Activated T-helper 1 cell treated with anti-CD3 and anti-CD28 coated beads, Interleukin-12 subunit alpha, Interleukin-12 subunit beta, Interleukin-2, Interleukin-4 antibody, amounts not matched to agents 30 ng/mL and 10 ng/mL and 1 ng/mL, durations not matched to agents 14 hours and 24 hours and 36 hours (primary cell): ENCODE measurements at regions of chr14 and their contacts with region 1.

Region 1: DNA sequence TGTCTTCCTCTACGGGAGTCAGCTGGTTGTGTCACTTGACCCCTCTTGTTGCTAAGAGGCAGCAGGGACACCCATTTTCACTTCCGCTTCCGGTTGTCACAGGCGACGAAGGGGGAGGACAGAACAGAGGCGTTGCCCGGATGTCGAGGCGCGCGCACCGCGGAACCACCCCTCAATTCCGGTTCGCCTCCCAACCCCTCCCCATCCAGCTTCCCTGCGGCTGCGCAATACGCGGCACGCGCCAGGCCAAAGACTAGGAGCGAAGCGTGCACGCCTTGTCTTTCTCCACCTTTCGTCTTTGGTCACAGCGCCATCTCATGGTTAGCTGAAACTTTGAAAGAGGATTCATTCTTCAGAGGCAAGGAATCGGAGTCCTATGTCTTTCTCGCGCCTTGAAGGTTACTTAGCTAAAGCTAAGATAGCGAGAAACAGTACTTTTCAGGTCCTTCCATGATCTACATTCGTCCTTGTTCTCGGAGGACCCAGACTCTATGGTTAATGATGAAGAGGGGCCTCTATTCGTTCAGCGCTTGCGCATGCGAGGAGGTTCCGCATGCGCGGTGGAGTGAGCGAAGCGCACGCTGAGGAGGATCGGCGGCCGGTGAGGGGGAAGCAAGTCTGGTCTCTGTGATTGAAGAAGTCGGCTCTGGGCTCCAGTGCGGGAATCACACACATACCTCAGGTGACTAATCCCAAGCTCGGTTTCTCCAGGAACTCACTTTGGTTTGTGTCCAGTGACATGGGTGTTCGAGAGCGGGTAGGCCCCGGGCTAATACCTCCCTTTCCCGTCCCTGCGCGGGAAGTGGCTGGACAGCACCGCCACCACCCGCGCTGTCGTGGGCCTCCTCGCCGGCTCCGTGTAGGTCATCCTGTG is at the starts of genes ATP6V1D and EIF2S1:
- DNase-seq: peak; percentile 100
- H3K4me3 Mint-ChIP-seq: peak within 1 kb of the TSS; percentile 92
- H3K27ac Mint-ChIP-seq: peak within 1 kb of the TSS; percentile 97
- H3K4me1 Mint-ChIP-seq: peaks cover 81% of the 10 kb centered on the region
- H3K27me3 Mint-ChIP-seq: no peaks in the 10 kb centered on the region
- total RNA-seq, gene ATP6V1D: 29.1 and 30.8 TPM in 2 replicates
- total RNA-seq, gene EIF2S1: 234 and 245 TPM in 2 replicates

Region 2: GRCh38 chr14:66610154-66610563 is 749.9 kb before region 1 on chr14:
- intact Hi-C with region 1: loop called (anchors 10 kb)
- DNase-seq: no peak
- H3K4me3 Mint-ChIP-seq: no peak overlapping the region
- H3K27ac Mint-ChIP-seq: peak overlapping the region; percentile 29
- H3K4me1 Mint-ChIP-seq: peaks cover 21% of the 10 kb centered on the region
- H3K27me3 Mint-ChIP-seq: peaks cover 5% of the 10 kb centered on the region

Region 3: GRCh38 chr14:67240978-67241414 is 119.0 kb before region 1 on chr14:
- intact Hi-C with region 1: loop called (anchors 1 kb)
- DNase-seq: peak; percentile 92
- H3K4me3 Mint-ChIP-seq: peak overlapping the region; percentile 87
- H3K27ac Mint-ChIP-seq: peak overlapping the region; percentile 80
- H3K4me1 Mint-ChIP-seq: peaks cover 18% of the 10 kb centered on the region
- H3K27me3 Mint-ChIP-seq: peaks cover 20% of the 10 kb centered on the region

Region 4: DNA sequence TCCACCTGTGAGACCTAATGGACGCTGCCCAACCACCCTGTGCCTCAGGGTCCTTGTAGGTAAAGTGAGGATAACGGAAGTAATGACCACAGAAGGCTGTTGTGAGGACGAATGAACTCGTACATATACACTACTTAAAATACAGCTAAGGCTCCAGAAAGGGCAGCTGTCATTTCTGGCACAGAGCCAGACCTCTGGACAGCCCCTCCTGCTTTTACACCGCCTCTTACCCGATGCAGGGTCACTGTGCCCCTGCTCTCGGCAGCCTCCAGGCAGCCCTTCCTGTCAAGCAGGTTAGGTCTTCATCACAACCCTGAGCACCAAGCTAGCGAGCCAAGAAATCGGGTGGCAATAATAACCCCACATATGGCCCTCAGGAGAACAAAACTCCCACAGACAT is 120.0 kb after region 1 on chr14:
- intact Hi-C with region 1: no loop called
- DNase-seq: no peak
- H3K4me3 Mint-ChIP-seq: no peak overlapping the region
- H3K27ac Mint-ChIP-seq: no peak overlapping the region
- H3K4me1 Mint-ChIP-seq: no peaks in the 10 kb centered on the region
- H3K27me3 Mint-ChIP-seq: no peaks in the 10 kb centered on the region

Region 5: DNA sequence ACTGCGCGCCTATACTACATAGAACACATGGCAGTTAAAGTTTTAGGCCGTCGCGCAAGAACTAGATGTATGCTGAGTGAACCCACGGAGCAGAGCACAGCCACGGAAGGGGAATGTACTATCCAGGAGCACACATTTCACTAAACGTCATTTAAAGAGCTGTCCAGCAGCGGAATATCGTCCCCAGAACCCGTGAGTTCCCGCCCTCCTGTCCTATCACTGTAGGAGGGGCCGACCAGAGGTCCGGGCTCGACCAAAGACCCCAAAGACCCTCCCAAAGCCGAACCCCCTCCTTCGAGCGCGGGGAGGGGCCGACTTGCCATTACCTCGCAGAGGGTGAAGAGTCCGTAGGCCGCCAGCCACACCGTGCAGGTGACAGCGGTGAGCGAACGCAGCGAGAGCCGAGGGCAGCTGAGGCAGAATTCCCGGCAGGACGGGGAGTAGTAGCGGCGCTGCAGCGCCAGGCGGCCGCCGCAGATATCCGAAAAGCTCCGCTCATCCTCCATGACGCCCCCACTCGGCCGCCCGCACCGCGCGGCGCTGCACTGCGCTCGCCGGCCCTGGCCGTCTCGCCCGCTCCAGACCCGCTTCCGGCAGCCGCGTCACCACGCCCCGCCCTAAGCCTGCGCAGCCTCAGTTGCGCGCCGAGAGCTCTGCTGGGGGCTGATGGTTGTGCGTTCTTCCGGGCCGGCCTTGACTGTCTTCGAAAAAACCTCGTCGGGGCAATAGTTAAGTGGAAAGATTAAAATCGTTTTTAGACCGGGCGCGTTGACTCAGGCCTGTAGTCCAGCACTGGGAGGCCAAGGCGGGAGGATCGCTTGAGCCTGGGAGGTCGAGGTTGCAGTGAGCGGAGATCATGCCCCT is 239.9 kb after region 1 on chr14 and contains the start of gene PIGH:
- intact Hi-C with region 1: loop called (anchors 1 kb)
- DNase-seq: peak; percentile 92
- H3K4me3 Mint-ChIP-seq: peak within 1 kb of the TSS; percentile 99
- H3K27ac Mint-ChIP-seq: peak within 1 kb of the TSS; percentile 94
- H3K4me1 Mint-ChIP-seq: peaks cover 44% of the 10 kb centered on the region
- H3K27me3 Mint-ChIP-seq: peaks cover 18% of the 10 kb centered on the region
- total RNA-seq, gene PIGH: 22.7 and 26.0 TPM in 2 replicates

Region 6: GRCh38 chr14:67674481-67675169 is 314.6 kb after region 1 on chr14 and contains the start of gene VTI1B:
- intact Hi-C with region 1: loop called (anchors 2 kb)
- DNase-seq: peak; percentile 70
- H3K4me3 Mint-ChIP-seq: peak within 1 kb of the TSS; percentile 90
- H3K27ac Mint-ChIP-seq: peak within 1 kb of the TSS; percentile 87
- H3K4me1 Mint-ChIP-seq: peaks cover 41% of the 10 kb centered on the region
- H3K27me3 Mint-ChIP-seq: no peaks in the 10 kb centered on the region
- total RNA-seq, gene VTI1B: 77.7 and 77.8 TPM in 2 replicates